Prostate gland (tissue), 2 donors: ENCODE measurements at regions of chr21 and their contacts with region 1.

Region 1: GRCh38 chr21:17819114-17819876 is at the start of gene C21orf91:
- DNase-seq: peak; percentile 85
- H3K4me3 ChIP-seq: peak within 1 kb of the TSS; percentile 90 to 99
- H3K27ac ChIP-seq: peak within 1 kb of the TSS; percentile 88 to 91
- H3K4me1 ChIP-seq: no peaks in the 10 kb centered on the region
- H3K27me3 ChIP-seq: no peaks in the 10 kb centered on the region
- CTCF ChIP-seq: peak in 1 of 4 experiments; percentile 3
- POLR2A ChIP-seq: peak; percentile 91
- total RNA-seq, gene C21orf91: 10.2 to 22.9 TPM

Region 2: GRCh38 chr21:17542371-17543011 is 276.8 kb before region 1 on chr21:
- intact Hi-C with region 1: no loop called
- DNase-seq: no peak
- H3K4me3 ChIP-seq: no peak overlapping the region
- H3K27ac ChIP-seq: no peak overlapping the region
- H3K4me1 ChIP-seq: no peaks in the 10 kb centered on the region
- H3K27me3 ChIP-seq: no peaks in the 10 kb centered on the region
- CTCF ChIP-seq: no peak
- POLR2A ChIP-seq: no peak

Region 3: DNA sequence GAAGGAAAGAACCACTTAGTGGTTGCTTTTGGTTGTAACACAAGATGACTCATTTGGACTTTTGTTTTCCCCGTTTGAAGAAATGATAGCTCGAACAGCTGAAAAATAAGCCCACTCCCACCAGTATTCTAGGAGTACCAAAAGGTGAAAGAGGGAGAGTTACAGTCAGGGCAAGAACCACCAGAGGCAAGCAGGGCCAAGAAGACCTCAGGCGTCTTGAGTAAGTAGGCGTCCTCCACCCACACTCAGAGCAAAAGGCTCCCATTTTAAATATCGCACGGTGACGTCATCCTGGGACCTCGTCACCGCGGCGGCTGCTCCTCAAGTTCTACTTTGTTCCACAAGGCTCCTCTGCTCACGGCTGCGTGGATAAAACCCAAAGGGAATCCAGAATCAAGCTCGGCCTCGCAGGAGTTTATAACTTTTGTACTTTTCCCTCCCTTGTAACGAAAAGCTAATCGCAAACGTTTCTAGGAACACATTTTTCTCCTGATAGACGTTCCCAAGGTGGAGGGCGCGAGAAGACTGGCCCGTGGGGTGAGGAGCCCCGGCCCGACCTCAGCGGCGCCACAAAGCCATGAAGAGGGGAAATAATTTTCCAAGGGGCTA is 207.8 kb before region 1 on chr21:
- intact Hi-C with region 1: loop called (anchors 5 kb)
- DNase-seq: peak; percentile 81
- H3K4me3 ChIP-seq: peak overlapping the region; percentile 70 to 80
- H3K27ac ChIP-seq: peak overlapping the region; percentile 86 to 87
- H3K4me1 ChIP-seq: no peaks in the 10 kb centered on the region
- H3K27me3 ChIP-seq: no peaks in the 10 kb centered on the region
- CTCF ChIP-seq: no peak
- POLR2A ChIP-seq: peak; percentile 80

Region 4: DNA sequence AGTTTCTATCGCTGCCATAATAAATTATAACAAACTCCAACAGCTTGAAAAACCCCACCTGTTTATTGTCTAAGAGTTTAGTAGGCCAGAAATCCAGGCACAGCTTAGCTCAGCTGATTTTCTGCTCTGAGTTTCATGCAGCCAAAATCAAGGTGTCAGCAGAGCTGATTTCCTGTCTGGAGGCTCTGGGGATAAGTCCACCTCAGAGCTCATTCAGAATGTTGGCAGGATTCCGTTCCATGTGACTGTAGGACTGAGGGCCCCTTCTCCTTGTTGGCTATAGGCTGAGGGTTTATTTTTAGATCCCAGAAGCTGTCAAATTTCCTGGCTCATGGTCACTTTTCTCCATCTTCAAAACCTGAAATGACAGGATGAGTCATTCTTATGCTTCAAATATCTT is 333.8 kb after region 1 on chr21:
- intact Hi-C with region 1: no loop called
- DNase-seq: no peak
- H3K4me3 ChIP-seq: no peak overlapping the region
- H3K27ac ChIP-seq: no peak overlapping the region
- H3K4me1 ChIP-seq: no peaks in the 10 kb centered on the region
- H3K27me3 ChIP-seq: no peaks in the 10 kb centered on the region
- CTCF ChIP-seq: no peak
- POLR2A ChIP-seq: no peak